Gastrocnemius medialis (tissue), 4 donors: ENCODE measurements at regions of chr9 and their contacts with region 1.

Region 1: DNA sequence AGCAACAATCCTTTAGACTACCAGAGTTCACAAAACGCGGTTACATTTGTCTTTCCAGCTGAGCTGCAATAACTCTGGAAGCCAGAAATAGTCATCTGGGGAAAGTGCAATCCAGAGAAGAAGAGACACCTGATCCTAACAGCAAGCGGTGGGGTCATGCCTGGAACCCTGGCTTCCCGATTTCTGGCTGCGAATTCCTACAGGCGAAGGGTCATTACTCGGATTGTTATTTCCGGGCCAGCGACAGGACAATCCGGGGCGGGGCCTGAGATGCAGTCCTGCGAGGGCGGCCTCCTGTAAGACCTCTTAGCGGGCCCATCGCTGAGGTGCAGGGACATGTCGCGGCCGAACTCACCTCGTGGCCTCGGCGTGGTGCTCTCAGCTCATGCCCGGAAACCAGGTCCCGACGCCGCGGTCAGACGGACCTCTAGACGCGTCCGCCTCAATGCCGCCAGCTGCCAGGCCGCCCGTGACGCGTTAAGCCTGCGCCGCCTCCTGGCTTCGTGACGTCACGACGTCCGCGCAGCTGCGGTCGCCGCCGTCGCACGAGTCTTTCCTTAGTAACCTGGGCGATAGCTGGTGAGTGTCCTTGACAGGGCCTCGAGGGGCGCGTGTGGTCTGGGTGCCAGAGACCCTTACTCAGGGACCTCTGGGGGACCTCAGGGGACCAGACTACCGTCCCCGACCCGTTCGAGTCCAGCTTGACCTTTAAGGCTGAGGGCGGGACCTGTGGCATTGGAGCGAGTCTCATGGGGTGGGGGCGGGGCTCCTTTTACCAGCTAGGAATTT is at the starts of genes MRRF and RBM18:
- DNase-seq: peak; percentile 82 to 89
- ATAC-seq: peak; percentile 87 to 94
- H3K4me3 ChIP-seq: peak within 1 kb of the TSS; percentile 66 to 95 (median 86)
- H3K27ac ChIP-seq: peak within 1 kb of the TSS; percentile 92 to 100 (median 98)
- H3K4me1 ChIP-seq: peaks cover 42 to 47% of the 10 kb centered on the region in 2 donors
- H3K27me3 ChIP-seq: no peaks in the 10 kb centered on the region
- CTCF ChIP-seq: peak in 1 of 5 experiments; percentile 39
- POLR2A ChIP-seq: peak; percentile 73 to 77
- total RNA-seq, gene MRRF: 33.2 to 55.7 (median 47.2) TPM
- total RNA-seq, gene RBM18: 10.6 to 26.6 (median 21.8) TPM

Region 2: DNA sequence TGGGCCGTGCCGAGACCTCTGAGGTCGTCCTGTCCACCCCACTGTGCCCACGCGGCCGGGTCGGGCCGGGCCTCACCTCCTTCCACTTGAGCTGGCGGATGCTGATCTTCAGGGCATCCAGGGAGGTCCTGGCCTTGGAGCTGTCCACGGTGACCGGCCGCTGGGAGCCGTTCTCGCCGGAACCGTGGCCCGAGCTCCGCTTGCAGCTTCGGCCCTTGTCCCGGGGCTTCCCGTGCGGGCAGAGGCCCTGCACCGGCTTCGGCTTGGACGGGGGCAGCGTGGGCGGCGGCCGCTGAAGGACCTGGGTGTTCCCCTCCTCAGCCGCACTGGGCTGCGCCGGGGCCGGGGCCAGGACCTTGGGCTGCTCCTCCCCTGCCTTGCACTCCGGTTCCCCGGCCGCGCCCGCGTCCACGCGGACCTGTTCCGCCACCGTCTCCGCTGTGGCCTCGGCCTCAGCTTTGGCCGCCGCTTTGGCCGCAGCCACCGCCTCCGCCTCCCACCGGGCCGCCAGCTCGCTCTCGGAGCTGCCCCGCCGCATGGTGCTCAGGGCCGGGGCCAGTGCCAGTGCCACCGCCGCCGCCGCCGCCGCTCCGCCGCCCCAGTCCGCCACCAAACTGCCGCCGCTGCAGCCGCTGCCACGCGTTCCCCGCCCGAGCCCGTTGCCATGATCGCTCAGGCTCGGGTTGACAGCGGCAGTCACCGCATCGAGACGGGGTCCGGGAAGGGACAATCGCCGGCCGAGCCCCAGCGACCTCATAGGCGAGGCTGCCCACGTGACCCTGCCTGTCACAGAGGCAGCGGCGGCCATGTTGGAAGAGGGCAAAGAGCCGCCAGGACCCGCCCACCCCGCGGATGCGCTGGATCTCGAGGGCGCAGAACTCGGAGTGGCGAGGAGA is 171.7 kb before region 1 on chr9 and contains the start of gene TTLL11:
- in situ Hi-C with region 1: no loop called
- intact Hi-C with region 1: loop called (anchors 1 kb)
- DNase-seq: peak; percentile 96
- ATAC-seq: peak; percentile 83 to 88
- H3K4me3 ChIP-seq: peak within 1 kb of the TSS; percentile 69 to 91 (median 78)
- H3K27ac ChIP-seq: peak within 1 kb of the TSS; percentile 84 to 94 (median 88)
- H3K4me1 ChIP-seq: peaks cover 48 to 63% of the 10 kb centered on the region in 2 donors
- H3K27me3 ChIP-seq: no peaks in the 10 kb centered on the region
- CTCF ChIP-seq: peak in 1 of 5 experiments; percentile 17
- POLR2A ChIP-seq: peak; percentile 85 to 86
- total RNA-seq, gene TTLL11: 12.3 to 20.5 (median 15.3) TPM

Region 3: DNA sequence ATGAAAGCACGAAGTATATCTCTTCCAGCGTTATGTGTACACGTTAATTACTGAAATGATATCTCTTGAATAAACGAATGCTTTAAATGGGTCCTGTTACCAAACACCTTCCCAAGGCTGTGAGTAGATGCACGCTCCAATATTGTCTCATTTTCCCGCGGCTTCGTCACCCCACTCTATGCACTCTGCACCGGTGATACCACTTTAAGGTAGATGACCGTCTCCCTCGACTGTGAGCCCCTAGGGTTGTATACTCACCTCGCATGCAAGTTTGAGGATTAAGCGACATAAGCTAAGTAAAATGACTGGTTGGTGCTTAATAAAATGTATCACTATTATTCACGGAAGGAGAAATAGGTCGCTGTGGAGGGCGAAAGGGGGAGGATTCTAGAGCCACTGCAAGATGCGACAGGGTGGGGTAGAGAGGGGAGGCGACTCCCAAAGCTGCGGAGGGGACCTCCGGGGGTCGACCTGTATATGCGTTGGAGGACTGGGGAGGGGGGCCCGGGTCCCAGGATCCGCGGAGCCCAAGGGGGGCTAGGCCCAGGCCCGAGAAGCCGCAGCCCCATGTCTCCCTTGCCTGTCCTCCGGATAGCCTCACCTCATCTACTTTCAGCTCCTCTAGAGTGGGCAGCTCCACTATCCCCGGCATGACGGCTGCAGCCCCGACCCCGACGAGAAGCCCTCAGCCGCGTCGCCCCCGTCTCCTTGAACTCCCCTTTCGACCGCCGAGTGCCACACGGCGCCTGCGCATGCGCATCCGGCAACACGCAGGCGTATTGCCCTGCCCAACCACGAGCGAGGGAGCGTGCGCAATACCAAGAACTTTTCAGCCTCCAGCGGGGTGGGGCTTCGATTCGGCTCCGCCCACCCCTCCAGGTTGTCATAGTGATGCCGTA is 105.3 kb before region 1 on chr9 and contains the starts of genes MORN5 and NDUFA8:
- in situ Hi-C with region 1: no loop called
- intact Hi-C with region 1: loop called (anchors 2 kb)
- DNase-seq: peak; percentile 91 to 95
- ATAC-seq: peak; percentile 95 to 96
- H3K4me3 ChIP-seq: peak within 1 kb of the TSS; percentile 65 to 97 (median 90)
- H3K27ac ChIP-seq: peak within 1 kb of the TSS; percentile 90 to 97 (median 94)
- H3K4me1 ChIP-seq: peaks cover 36 to 37% of the 10 kb centered on the region in 2 donors
- H3K27me3 ChIP-seq: no peaks in the 10 kb centered on the region
- CTCF ChIP-seq: peak in 4 of 5 experiments; percentile 10 to 31 (median 19)
- POLR2A ChIP-seq: peak; percentile 87 to 90
- total RNA-seq, gene MORN5: not detected
- total RNA-seq, gene NDUFA8: 51.0 to 114 (median 92.8) TPM

Region 4: GRCh38 chr9:122350638-122351355 is 86.2 kb after region 1 on chr9:
- in situ Hi-C with region 1: no loop called
- intact Hi-C with region 1: loop called (anchors 2 kb)
- DNase-seq: peak; percentile 50 to 65
- ATAC-seq: peak; percentile 80 to 88
- H3K4me3 ChIP-seq: no peak overlapping the region
- H3K27ac ChIP-seq: no peak overlapping the region
- H3K4me1 ChIP-seq: peaks cover 0 to 8% of the 10 kb centered on the region in 2 donors
- H3K27me3 ChIP-seq: no peaks in the 10 kb centered on the region
- CTCF ChIP-seq: peak; percentile 92 to 96 (median 96)
- POLR2A ChIP-seq: no peak